ENCODE measurements at regions of chr5 and their contacts with region 1.

Region 1: GRCh38 chr5:80069918-80070318 is 34.8 kb downstream of the THBS4 start:
- DNase-seq: no peak
- H3K4me3 ChIP-seq: no peak overlapping the region
- H3K27ac ChIP-seq: no peak overlapping the region
- H3K4me1 ChIP-seq: no peaks in the 10 kb centered on the region
- H3K27me3 ChIP-seq: no peaks in the 10 kb centered on the region
- CTCF ChIP-seq: no peak

Region 2: GRCh38 chr5:79436224-79436623 is 633.7 kb before region 1 on chr5:
- CTCF ChIA-PET with region 1: no interaction called
- dilution Hi-C with region 1: no loop called
- in situ Hi-C with region 1: no loop called
- intact Hi-C with region 1: no loop called
- DNase-seq: peak; percentile 57
- H3K4me3 ChIP-seq: no peak overlapping the region
- H3K27ac ChIP-seq: no peak overlapping the region
- H3K4me1 ChIP-seq: peaks cover 5% of the 10 kb centered on the region
- H3K27me3 ChIP-seq: no peaks in the 10 kb centered on the region
- CTCF ChIP-seq: no peak

Region 3: DNA sequence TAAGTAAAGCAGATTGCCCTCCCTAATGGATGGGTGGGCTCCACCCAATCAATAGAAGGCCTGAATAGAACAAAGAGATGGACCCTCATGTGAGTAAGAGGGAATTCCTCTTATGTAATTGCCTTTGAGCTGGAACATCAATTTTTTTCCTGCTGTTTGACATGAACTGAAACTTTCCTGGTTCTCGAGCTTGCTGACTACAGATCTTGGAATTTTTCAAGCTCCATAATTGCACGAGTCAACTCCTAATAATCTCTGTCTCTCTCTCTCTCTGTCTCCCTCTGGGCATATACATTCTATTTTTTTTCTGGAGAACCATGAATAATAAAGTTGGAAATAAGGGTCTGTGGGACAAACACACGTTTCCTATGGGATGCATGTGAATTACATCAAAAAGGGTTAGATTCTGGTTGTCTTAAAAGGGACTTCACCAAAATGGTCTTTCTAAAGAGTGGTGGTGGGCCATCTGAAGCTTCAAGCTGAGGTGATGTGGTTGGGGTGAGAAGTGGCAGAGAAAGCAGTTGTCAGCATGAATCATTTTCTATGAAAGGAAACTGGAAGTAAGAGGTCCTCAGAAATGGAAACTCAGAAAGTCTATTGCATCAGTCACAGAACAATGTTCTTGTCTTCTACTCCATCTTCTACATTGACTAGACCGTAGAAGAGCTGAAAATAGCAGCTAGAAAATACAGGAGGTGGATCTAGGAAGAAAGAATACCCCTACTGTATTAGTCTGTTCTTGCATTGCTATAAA is 509.0 kb before region 1 on chr5:
- CTCF ChIA-PET with region 1: no interaction called
- dilution Hi-C with region 1: no loop called
- in situ Hi-C with region 1: loop called in 1 of 2 experiments (anchors 10 kb)
- intact Hi-C with region 1: no loop called
- DNase-seq: peak; percentile 40
- H3K4me3 ChIP-seq: no peak overlapping the region
- H3K27ac ChIP-seq: no peak overlapping the region
- H3K4me1 ChIP-seq: peaks cover 8% of the 10 kb centered on the region
- H3K27me3 ChIP-seq: no peaks in the 10 kb centered on the region
- CTCF ChIP-seq: no peak

Region 4: DNA sequence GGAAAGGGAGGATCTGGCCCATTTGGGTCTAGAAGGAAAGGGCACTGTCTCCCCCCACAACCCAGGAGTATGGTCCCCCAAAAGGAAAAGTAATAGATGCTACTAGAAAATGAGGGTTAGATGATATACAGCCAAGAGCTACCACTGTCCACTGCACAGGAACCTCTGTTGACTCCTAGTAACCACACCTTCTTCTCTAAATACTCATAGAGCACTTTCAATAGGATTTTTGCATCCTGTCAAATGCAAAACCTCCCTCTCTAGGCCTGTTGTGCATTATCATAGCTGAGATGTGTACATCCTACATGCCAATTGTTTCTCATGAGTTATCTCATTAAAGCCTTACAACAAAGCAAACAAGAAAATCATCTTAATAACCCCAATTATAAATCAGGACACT is 32.1 kb after region 1 on chr5:
- CTCF ChIA-PET with region 1: no interaction called
- dilution Hi-C with region 1: no loop called
- in situ Hi-C with region 1: no loop called
- intact Hi-C with region 1: no loop called
- DNase-seq: no peak
- H3K4me3 ChIP-seq: no peak overlapping the region
- H3K27ac ChIP-seq: no peak overlapping the region
- H3K4me1 ChIP-seq: no peaks in the 10 kb centered on the region
- H3K27me3 ChIP-seq: no peaks in the 10 kb centered on the region
- CTCF ChIP-seq: no peak

Region 5: GRCh38 chr5:80348171-80348570 is 278.3 kb after region 1 on chr5:
- CTCF ChIA-PET with region 1: no interaction called
- dilution Hi-C with region 1: no loop called
- in situ Hi-C with region 1: no loop called
- intact Hi-C with region 1: no loop called
- DNase-seq: no peak
- H3K4me3 ChIP-seq: no peak overlapping the region
- H3K27ac ChIP-seq: no peak overlapping the region
- H3K4me1 ChIP-seq: no peaks in the 10 kb centered on the region
- H3K27me3 ChIP-seq: no peaks in the 10 kb centered on the region
- CTCF ChIP-seq: no peak